Activated CD8-positive, alpha-beta T cell treated with anti-CD3 and anti-CD28 coated beads for 36 hours (primary cell): ENCODE measurements at regions of chr10 and their contacts with region 1.

Region 1: GRCh38 chr10:43026011-43026973 is 50.6 kb upstream of the RET start:
- DNase-seq: no peak
- ATAC-seq: no peak
- H3K4me3 Mint-ChIP-seq: no peak overlapping the region
- H3K27ac Mint-ChIP-seq: no peak overlapping the region
- H3K4me1 Mint-ChIP-seq: no peaks in the 10 kb centered on the region
- H3K27me3 Mint-ChIP-seq: peaks cover 1% of the 10 kb centered on the region
- CTCF ChIP-seq: no peak

Region 2: GRCh38 chr10:42960491-42960990 is 65.8 kb before region 1 on chr10:
- CTCF ChIA-PET with region 1: no interaction called
- POLR2A ChIA-PET with region 1: no interaction called
- intact Hi-C with region 1: loop called (anchors 10 kb)
- DNase-seq: no peak
- ATAC-seq: no peak
- H3K4me3 Mint-ChIP-seq: no peak overlapping the region
- H3K27ac Mint-ChIP-seq: no peak overlapping the region
- H3K4me1 Mint-ChIP-seq: no peaks in the 10 kb centered on the region
- H3K27me3 Mint-ChIP-seq: no peaks in the 10 kb centered on the region
- CTCF ChIP-seq: no peak

Region 3: DNA sequence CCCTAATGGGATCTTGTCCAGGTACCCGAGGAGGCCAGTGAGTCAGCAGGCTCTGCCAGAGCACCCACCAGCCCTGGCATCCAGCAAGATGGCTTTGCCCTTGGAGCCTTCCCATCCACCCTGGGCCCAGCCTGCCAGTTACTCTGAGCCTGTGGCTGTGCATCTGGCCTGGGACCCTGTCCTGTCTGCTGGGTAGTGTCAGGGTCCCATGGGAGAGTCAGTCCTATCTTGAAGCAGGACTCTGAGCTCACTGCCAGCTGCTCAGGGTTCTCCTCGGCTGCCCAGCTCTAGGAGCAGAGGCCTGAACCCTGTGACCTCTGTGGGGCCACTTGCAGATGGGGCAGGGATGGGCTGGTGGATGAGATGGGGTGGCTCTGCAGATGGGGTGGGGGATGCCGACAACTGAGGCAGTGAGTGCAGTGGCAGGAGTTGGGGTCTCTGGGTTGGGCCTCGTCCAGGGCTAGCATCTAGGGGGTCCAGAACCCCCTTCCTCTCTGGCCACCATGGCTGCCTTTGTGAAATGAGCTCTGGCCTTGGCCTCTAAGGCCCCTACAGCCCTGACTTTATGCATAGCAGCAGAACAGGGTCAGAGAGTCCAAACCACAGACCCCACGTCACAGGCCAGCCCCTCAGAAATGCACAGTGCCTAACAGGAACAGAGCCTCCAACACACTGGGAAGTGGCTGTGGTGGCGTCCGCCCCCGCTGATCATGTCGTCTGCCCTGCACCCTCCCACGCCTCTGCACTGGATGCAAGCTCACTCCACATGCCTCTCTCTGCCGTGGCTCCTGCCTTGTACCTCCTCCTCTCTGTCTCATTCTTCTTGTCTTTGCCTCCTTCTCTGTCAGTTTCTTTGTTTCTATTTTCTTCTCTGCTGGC is 37.5 kb before region 1 on chr10:
- CTCF ChIA-PET with region 1: no interaction called
- POLR2A ChIA-PET with region 1: no interaction called
- intact Hi-C with region 1: no loop called
- DNase-seq: peak; percentile 76
- ATAC-seq: peak; percentile 82
- H3K4me3 Mint-ChIP-seq: no peak overlapping the region
- H3K27ac Mint-ChIP-seq: no peak overlapping the region
- H3K4me1 Mint-ChIP-seq: peaks cover 17% of the 10 kb centered on the region
- H3K27me3 Mint-ChIP-seq: no peaks in the 10 kb centered on the region
- CTCF ChIP-seq: no peak

Region 4: GRCh38 chr10:43110338-43111086 is 84.2 kb after region 1 on chr10:
- CTCF ChIA-PET with region 1: no interaction called
- POLR2A ChIA-PET with region 1: no interaction called
- intact Hi-C with region 1: no loop called
- DNase-seq: no peak
- ATAC-seq: no peak
- H3K4me3 Mint-ChIP-seq: no peak overlapping the region
- H3K27ac Mint-ChIP-seq: no peak overlapping the region
- H3K4me1 Mint-ChIP-seq: peaks cover 4% of the 10 kb centered on the region
- H3K27me3 Mint-ChIP-seq: no peaks in the 10 kb centered on the region
- CTCF ChIP-seq: no peak